GM12878 (cell line): ENCODE measurements at regions of chr12 and their contacts with region 1.

Region 1: DNA sequence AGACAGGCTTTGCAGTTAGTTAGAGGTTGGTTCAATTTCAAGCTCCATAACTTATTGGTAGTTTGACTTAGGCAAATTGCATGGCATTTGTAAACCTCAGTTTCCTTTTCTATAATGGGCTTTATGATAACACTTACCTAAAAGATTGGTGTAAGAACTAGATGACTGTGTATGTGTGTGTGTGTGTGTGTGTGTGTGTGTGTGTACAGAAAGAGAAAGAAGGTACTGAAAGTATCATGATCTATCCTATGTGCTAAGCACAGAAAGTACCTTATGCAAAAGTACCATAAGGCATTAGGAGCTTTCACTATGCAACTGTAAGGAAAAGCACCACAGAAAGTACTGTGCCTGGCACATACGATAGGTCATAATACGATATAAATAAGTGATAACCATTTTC is 304.3 kb upstream of the KITLG start:
- DNase-seq: peak; percentile 23
- ATAC-seq: peak; percentile 98
- H3K4me3 ChIP-seq: no peak overlapping the region
- H3K27ac ChIP-seq: no peak overlapping the region
- H3K4me1 ChIP-seq: no peaks in the 10 kb centered on the region
- H3K27me3 ChIP-seq: no peaks in the 10 kb centered on the region
- CTCF ChIP-seq: no peak
- EP300 ChIP-seq: peak in 1 of 2 experiments; percentile 85; a peak in 2 of 4 replicates
- POLR2A ChIP-seq: no peak
- RAD21 ChIP-seq: no peak

Region 2: GRCh38 chr12:88816211-88816613 is 68.4 kb before region 1 on chr12:
- CTCF ChIA-PET with region 1: no interaction called
- POLR2A ChIA-PET with region 1: no interaction called
- RAD21 ChIA-PET with region 1: no interaction called
- SMC1A ChIA-PET with region 1: no interaction called
- in situ Hi-C with region 1: no loop called
- intact Hi-C with region 1: no loop called
- DNase-seq: no peak
- ATAC-seq: no peak
- H3K4me3 ChIP-seq: no peak overlapping the region
- H3K27ac ChIP-seq: no peak overlapping the region
- H3K4me1 ChIP-seq: no peaks in the 10 kb centered on the region
- H3K27me3 ChIP-seq: no peaks in the 10 kb centered on the region
- CTCF ChIP-seq: no peak
- EP300 ChIP-seq: no peak
- POLR2A ChIP-seq: no peak
- RAD21 ChIP-seq: no peak

Region 3: GRCh38 chr12:88870000-88870737 is 14.4 kb before region 1 on chr12:
- CTCF ChIA-PET with region 1: interaction called, 4 read pairs
- POLR2A ChIA-PET with region 1: no interaction called
- RAD21 ChIA-PET with region 1: interaction called, 6 read pairs
- SMC1A ChIA-PET with region 1: interaction called, 14 read pairs
- in situ Hi-C with region 1: no loop called
- intact Hi-C with region 1: no loop called
- DNase-seq: no peak
- ATAC-seq: peak; percentile 76
- H3K4me3 ChIP-seq: no peak overlapping the region
- H3K27ac ChIP-seq: no peak overlapping the region
- H3K4me1 ChIP-seq: no peaks in the 10 kb centered on the region
- H3K27me3 ChIP-seq: no peaks in the 10 kb centered on the region
- CTCF ChIP-seq: no peak
- EP300 ChIP-seq: peak; percentile 21 to 42; a peak in 1 of 4 replicates
- POLR2A ChIP-seq: no peak
- RAD21 ChIP-seq: no peak

Region 4: DNA sequence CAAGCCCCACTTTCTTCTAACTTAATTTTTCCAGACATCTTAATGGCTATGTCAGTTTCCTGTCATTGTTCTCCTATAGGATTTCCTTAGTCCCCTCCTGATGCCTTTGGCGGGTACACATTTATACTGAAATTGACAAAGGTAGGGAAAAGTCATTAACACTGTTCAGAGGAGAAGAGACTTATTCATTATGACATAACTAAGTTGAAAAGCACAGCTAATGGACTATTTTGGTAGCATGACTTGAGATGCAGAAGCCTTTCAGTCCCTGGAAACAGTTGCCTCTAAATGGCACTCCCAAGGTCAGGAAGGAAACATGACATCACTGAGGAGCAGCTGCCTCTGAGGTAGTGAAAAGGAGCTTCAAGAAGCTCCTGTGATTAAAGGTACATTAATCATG is 13.1 kb after region 1 on chr12:
- CTCF ChIA-PET with region 1: interaction called, 7 read pairs
- POLR2A ChIA-PET with region 1: interaction called, 3 read pairs
- RAD21 ChIA-PET with region 1: no interaction called
- SMC1A ChIA-PET with region 1: interaction called, 12 read pairs
- in situ Hi-C with region 1: no loop called
- intact Hi-C with region 1: no loop called
- DNase-seq: no peak
- ATAC-seq: no peak
- H3K4me3 ChIP-seq: no peak overlapping the region
- H3K27ac ChIP-seq: no peak overlapping the region
- H3K4me1 ChIP-seq: no peaks in the 10 kb centered on the region
- H3K27me3 ChIP-seq: no peaks in the 10 kb centered on the region
- CTCF ChIP-seq: no peak
- EP300 ChIP-seq: no peak
- POLR2A ChIP-seq: no peak
- RAD21 ChIP-seq: no peak

Region 5: GRCh38 chr12:88909510-88909909 is 24.9 kb after region 1 on chr12:
- CTCF ChIA-PET with region 1: no interaction called
- POLR2A ChIA-PET with region 1: no interaction called
- RAD21 ChIA-PET with region 1: interaction called, 3 read pairs
- SMC1A ChIA-PET with region 1: no interaction called
- in situ Hi-C with region 1: no loop called
- intact Hi-C with region 1: loop called (anchors 2 kb)
- DNase-seq: no peak
- ATAC-seq: no peak
- H3K4me3 ChIP-seq: no peak overlapping the region
- H3K27ac ChIP-seq: no peak overlapping the region
- H3K4me1 ChIP-seq: no peaks in the 10 kb centered on the region
- H3K27me3 ChIP-seq: no peaks in the 10 kb centered on the region
- CTCF ChIP-seq: no peak
- EP300 ChIP-seq: no peak
- POLR2A ChIP-seq: no peak
- RAD21 ChIP-seq: no peak